WTC11 (cell line): ENCODE measurements at regions of chr2 and their contacts with region 1.

Region 1: GRCh38 chr2:120343433-120344105 is 2.4 kb upstream of the INHBB start:
- DNase-seq: peak; percentile 90
- ATAC-seq: peak; percentile 78
- H3K4me3 Mint-ChIP-seq: peak overlapping the region; percentile 53
- H3K27ac Mint-ChIP-seq: no peak overlapping the region
- H3K4me1 Mint-ChIP-seq: peaks cover 31% of the 10 kb centered on the region
- H3K27me3 Mint-ChIP-seq: peaks cover 79% of the 10 kb centered on the region
- CTCF ChIP-seq: peak; percentile 61

Region 2: DNA sequence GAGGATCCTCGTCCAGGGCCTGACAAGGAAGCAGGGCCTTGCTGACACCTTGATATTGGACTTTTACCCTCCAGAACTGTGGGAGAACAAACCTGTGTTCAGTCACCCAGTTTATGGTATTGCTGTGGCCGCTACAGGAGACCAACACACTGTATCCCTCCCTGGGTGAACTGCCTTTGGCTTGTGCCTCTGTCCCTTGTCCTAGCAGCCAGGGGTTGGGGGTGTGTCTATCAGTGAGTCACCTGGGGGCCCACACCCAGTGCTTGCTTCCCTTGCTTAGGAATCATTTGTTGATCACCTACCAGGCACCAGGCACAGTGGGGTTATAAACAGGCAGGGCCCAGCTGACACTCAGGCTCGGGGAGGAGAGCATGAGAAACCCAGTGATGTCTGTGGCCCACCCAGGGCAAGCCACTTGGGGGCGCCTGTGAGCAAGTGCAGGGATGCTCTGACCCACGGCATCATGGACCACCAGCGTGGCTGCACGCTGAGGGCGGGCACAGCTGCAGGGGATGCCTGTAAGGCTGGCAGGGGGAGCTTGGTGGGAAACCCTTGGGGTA is 137.5 kb before region 1 on chr2:
- CTCF ChIA-PET with region 1: interaction called, 10 read pairs
- POLR2A ChIA-PET with region 1: no interaction called
- DNase-seq: peak; percentile 85
- ATAC-seq: peak; percentile 86
- H3K4me3 Mint-ChIP-seq: no peak overlapping the region
- H3K27ac Mint-ChIP-seq: no peak overlapping the region
- H3K4me1 Mint-ChIP-seq: peaks cover 4% of the 10 kb centered on the region
- H3K27me3 Mint-ChIP-seq: no peaks in the 10 kb centered on the region; the same call in 1 of the 2 replicates
- CTCF ChIP-seq: peak; percentile 81; the same call in 1 of the 2 replicates

Region 3: DNA sequence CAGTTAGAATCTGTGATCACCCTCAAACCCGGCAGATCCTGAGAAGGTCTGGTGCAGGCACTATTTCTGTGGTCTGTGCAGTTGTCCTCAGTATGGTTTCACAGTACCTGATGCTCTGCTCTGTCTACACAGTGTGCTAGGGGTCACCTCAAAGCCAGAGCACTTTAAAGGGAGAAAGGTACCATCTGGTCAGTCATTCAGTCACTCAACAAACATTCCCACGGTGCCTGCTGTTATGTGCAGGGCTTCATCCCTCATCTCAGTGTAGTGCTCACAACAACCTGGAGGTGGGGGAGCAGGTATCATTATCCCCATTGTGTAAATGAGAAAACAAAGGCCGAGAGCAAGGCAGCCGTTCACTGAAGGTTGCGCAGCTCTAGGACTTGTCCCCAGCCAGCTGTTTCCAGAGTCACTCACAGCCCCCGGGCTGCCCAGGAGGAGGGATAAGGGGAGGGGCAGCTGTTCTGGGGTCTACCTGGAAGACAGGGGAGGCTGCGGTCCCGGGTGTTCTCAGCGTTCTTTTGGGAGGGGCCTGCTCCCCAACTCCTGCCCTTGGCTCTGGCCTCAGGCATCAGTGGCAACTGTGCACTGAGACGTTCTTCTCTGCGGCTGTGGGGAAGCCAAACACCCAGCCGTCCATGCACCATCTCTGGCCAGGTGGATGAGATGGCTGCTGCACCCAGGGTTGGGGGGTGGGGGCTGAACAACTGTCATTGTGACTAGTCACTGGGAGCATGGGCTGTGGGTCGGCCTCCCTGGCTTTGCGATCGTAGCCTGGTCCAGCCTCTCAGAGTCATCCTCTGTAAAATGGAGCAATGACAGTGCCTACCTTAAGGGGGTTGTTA is 11.6 kb after region 1 on chr2:
- CTCF ChIA-PET with region 1: interaction called, 10 read pairs
- POLR2A ChIA-PET with region 1: no interaction called
- DNase-seq: no peak
- ATAC-seq: no peak
- H3K4me3 Mint-ChIP-seq: no peak overlapping the region
- H3K27ac Mint-ChIP-seq: no peak overlapping the region
- H3K4me1 Mint-ChIP-seq: peaks cover 10% of the 10 kb centered on the region
- H3K27me3 Mint-ChIP-seq: peaks cover 31% of the 10 kb centered on the region
- CTCF ChIP-seq: no peak

Region 4: DNA sequence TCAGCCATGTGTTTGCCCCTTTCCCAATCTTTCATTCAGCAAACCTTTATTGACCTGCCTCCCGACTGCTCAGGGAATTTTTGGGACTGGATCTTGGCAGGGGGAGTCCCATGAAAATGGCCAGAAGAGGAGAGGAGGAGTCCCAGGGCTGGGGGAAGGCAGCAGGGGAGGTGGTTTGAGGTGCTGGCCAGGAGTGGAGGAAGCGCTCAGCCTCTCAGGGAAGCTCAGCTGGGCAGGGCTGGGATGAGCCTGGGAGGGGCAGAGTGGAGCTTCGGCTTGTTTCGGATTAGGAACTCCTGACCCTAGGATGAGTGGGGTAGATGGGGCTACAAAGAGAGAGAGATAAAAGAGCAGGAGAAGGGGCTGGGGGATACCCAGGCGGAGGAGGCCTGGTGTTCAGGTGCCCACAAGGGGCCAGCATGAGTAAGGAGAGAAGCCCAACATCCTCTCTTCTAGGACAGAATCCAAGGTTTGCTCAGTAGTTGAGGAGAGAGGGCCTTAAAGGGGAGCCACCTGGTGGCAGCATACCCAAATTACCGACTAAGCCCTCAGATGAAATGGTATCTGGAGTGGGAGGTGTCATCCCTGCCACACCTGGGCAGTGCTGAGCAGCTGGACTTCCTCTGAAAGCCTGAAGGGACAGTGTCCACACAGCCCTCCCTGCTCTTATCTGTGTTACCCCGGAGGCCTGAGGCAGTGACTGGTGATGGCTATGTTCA is 93.5 kb after region 1 on chr2:
- CTCF ChIA-PET with region 1: interaction called, 66 read pairs
- POLR2A ChIA-PET with region 1: interaction called, 14 read pairs
- DNase-seq: peak; percentile 84
- ATAC-seq: peak; percentile 78
- H3K4me3 Mint-ChIP-seq: no peak overlapping the region
- H3K27ac Mint-ChIP-seq: no peak overlapping the region
- H3K4me1 Mint-ChIP-seq: peaks cover 30% of the 10 kb centered on the region
- H3K27me3 Mint-ChIP-seq: peaks cover 77% of the 10 kb centered on the region
- CTCF ChIP-seq: peak; percentile 33; the same call in 1 of the 2 replicates

Region 5: DNA sequence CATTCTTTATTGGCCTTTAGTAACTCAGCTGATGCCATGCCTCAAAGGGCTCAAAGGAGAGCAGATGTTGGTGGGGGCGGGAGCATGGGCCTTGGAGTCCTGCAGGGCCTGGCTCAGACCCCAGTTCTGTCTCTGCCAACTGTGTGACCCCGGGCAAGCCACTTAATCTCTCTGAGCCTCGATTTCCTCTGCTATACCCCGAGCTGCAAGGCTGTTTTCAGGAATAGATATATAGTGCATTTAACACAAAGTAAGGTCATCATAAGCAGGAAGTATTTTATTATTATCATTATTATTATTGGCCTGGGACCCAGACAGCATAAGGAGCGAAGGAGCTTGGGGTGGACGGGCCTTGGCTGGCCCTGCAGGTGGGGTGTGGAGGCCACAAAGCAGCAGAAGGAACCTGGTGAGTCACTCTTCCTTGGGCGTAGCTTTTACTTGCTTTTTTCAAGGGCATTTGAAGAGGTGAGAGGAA is 165.0 kb after region 1 on chr2:
- CTCF ChIA-PET with region 1: interaction called, 13 read pairs
- POLR2A ChIA-PET with region 1: no interaction called
- DNase-seq: no peak
- ATAC-seq: no peak
- H3K4me3 Mint-ChIP-seq: no peak overlapping the region
- H3K27ac Mint-ChIP-seq: no peak overlapping the region
- H3K4me1 Mint-ChIP-seq: peaks cover 4% of the 10 kb centered on the region; the same call in 1 of the 2 replicates
- H3K27me3 Mint-ChIP-seq: peaks cover 12% of the 10 kb centered on the region
- CTCF ChIP-seq: no peak

Region 6: GRCh38 chr2:120680136-120680761 is 336.7 kb after region 1 on chr2:
- CTCF ChIA-PET with region 1: interaction called, 14 read pairs
- POLR2A ChIA-PET with region 1: no interaction called
- DNase-seq: peak; percentile 88
- ATAC-seq: peak; percentile 80
- H3K4me3 Mint-ChIP-seq: no peak overlapping the region
- H3K27ac Mint-ChIP-seq: no peak overlapping the region
- H3K4me1 Mint-ChIP-seq: peaks cover 3% of the 10 kb centered on the region; the same call in 1 of the 2 replicates
- H3K27me3 Mint-ChIP-seq: peaks cover 39% of the 10 kb centered on the region
- CTCF ChIP-seq: peak; percentile 65